ENCODE measurements at regions of chr11 and their contacts with region 1.

Region 1: DNA sequence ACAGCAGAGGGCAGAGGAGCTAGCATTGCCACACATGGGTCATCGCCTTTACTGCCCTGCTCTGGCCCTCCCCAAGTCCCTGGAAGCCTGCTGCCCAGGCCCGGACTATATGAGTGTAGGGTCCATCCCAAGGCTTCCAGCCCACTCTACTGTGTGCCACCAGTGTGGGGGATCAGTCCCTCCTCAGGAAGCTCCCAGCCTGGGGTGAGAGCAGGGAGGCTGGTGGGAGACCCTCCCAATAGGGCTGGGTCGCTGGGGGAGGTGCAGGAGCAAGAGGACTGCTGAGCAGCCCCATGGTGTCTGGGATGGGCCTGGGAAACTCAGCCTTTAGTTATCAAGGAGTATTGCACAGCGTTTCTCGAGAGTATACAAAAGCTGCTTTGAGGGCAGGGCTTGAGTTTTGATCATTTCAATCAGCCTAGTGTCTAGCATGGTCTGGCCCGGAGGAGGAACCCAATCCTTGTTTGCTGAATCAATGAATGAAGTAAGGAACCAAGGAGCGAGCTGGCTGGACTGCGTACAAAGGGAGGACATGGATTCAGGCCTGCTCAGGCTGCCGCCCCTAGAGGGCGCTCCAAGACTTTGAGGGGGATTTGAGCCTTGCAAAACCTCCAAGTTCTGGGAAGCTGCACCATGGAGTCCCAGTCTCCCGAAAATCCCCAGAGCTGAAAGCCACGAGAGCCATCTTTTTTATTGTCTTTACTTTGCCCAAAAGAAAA is 89.0 kb upstream of the PARVA start:
- DNase-seq: peak; percentile 88 to 90
- ATAC-seq: peak; percentile 43 to 77
- H3K4me3 ChIP-seq: no peak overlapping the region
- H3K27ac ChIP-seq: peak overlapping the region; percentile 94 to 99
- H3K4me1 ChIP-seq: peaks cover 46% of the 10 kb centered on the region
- CTCF ChIP-seq: peak; percentile 97
- EP300 ChIP-seq: no peak
- POLR2A ChIP-seq: no peak
- RAD21 ChIP-seq: peak; percentile 93 to 96

Region 2: GRCh38 chr11:12298610-12299009 is 10.2 kb after region 1 on chr11:
- CTCF ChIA-PET with region 1: interaction called, 28 read pairs
- POLR2A ChIA-PET with region 1: interaction called, 3 read pairs
- DNase-seq: no peak
- ATAC-seq: no peak
- H3K4me3 ChIP-seq: no peak overlapping the region
- H3K27ac ChIP-seq: no peak overlapping the region
- H3K4me1 ChIP-seq: no peaks in the 10 kb centered on the region
- CTCF ChIP-seq: no peak
- EP300 ChIP-seq: no peak
- POLR2A ChIP-seq: no peak
- RAD21 ChIP-seq: no peak

Region 3: DNA sequence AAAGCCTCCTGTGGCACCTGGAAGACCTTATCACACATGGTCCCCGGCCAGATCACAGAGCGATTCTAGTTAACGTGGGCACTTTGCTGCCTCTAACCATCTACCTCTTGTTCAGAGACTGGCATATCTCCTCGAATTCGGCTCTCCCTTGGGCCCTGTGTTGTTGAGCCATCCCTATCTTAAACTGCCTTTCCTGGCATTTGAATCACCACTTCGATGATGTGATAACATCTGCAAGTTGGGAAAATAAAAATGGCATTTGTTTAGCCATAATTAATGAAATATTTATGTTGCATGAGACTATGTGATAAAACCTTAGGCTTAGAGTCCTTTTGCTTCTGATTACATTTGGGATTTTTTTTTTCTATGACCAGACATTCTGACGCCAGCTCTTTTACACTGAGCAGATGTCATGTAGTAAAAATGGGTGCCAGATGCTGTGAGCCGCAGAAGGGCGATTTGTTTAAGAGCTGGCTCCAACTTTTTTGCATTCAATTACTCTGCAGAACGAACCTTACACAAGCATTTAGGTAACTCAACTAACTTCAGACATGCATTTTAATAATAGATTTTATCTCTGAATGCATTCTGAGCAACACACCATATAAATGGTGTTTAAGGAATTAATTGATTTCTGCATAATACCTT is 30.5 kb after region 1 on chr11:
- CTCF ChIA-PET with region 1: interaction called, 111 read pairs
- POLR2A ChIA-PET with region 1: no interaction called
- DNase-seq: no peak
- ATAC-seq: no peak
- H3K4me3 ChIP-seq: no peak overlapping the region
- H3K27ac ChIP-seq: no peak overlapping the region
- H3K4me1 ChIP-seq: no peaks in the 10 kb centered on the region
- CTCF ChIP-seq: no peak
- EP300 ChIP-seq: no peak
- POLR2A ChIP-seq: no peak
- RAD21 ChIP-seq: no peak

Region 4: GRCh38 chr11:12893787-12894672 is 605.7 kb after region 1 on chr11:
- CTCF ChIA-PET with region 1: interaction called, 35 read pairs
- POLR2A ChIA-PET with region 1: no interaction called
- DNase-seq: peak; percentile 48 to 51
- ATAC-seq: peak; percentile 53 to 76
- H3K4me3 ChIP-seq: no peak overlapping the region
- H3K27ac ChIP-seq: peak overlapping the region; percentile 1 to 78; a peak in 4 of 6 replicates
- H3K4me1 ChIP-seq: peaks cover 17% of the 10 kb centered on the region
- CTCF ChIP-seq: peak; percentile 91
- EP300 ChIP-seq: no peak
- POLR2A ChIP-seq: no peak; the same call in 1 of the 2 replicates
- RAD21 ChIP-seq: peak; percentile 90

Region 5: DNA sequence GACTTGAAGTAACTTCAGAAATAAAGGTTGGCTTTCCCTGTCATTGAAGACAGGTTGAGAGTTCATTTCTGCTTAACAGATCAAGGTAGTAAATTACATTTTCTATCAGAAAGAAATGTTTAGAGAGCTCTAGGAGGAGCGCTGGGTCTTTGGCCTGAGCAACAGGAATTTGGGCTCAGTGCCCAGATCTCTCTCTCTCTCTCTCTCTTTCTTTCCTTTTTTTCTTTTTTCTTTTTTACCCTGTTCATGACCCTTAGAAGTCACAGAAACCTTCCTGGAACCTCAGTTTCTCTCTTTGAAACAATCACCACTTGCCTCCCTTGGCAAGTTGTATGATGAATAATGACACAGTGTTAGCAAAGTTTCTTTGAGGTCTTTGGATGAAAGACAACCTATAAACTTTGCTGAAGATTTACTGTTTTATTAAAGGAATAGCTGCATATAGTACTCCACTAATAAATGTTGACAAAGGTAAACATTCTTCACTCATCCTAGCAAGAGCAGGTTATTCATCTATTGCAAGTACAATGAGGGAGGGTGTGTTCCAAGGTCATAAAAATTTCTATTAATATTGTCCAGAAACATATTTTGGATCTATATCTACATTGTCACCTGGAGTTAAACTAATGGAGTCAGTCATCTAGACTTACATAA is 685.3 kb after region 1 on chr11:
- CTCF ChIA-PET with region 1: interaction called, 10 read pairs
- POLR2A ChIA-PET with region 1: no interaction called
- DNase-seq: no peak
- ATAC-seq: no peak
- H3K4me3 ChIP-seq: no peak overlapping the region
- H3K27ac ChIP-seq: no peak overlapping the region
- H3K4me1 ChIP-seq: peaks cover 3% of the 10 kb centered on the region; the same call in 1 of the 3 replicates
- CTCF ChIP-seq: no peak
- EP300 ChIP-seq: no peak
- POLR2A ChIP-seq: no peak
- RAD21 ChIP-seq: no peak

Measured in A549 (cell line).